ENCODE measurements at regions of chr12 and their contacts with region 1.

Region 1: DNA sequence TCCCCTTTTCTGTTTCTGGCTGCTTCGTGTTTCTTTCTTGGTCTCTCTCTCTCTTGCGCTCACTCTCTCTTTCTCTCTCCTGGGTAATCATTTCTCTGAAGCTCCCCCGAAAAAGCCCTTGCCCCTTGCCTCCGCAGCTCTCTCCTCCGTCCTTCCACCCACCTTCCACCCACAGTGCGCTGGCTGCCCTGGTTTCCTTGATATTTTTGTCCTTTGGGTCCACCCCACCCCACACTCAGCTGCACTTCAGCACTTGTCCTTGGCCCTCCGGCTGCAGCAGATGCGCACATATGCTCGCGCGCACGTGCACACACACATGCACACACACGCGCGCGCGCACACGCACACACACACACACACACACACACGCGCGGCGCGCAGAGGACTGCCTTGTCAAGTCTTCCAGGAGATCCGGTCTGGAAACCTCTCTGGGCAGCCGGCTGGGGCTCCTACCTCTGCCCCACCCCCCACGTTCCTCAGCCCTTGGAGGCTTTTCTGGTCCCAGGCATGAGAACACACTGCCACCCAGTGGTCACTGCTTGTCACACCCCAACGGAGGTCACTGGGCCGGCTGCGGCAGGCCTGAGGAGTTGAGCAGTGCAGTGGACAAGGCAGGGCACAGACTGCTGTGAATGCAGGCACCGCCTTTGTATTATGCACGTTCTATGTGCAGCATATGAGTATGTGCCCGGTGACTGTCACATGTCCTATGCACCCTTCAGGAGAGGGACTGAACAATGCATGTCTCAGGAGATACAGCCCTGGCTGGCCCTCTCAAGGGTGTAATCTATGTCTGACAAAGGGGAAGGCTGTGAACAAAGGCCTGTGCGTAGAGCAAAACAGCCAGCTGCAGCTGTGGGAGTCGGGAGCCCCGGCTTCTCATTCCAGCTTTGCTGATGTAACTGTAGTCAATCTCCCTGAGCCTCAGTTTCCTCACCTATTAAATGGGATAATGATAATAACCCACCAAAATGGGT is 6.5 kb downstream of the LAG3 start:
- DNase-seq: peak; percentile 53
- H3K4me3 ChIP-seq: peak overlapping the region; percentile 36
- H3K27me3 ChIP-seq: no peaks in the 10 kb centered on the region
- CTCF ChIP-seq: peak; percentile 95

Region 2: GRCh38 chr12:6764011-6764828 is 14.6 kb before region 1 on chr12:
- CTCF ChIA-PET with region 1: interaction called, 222 read pairs
- POLR2A ChIA-PET with region 1: interaction called, 4 read pairs
- DNase-seq: peak; percentile 98
- H3K4me3 ChIP-seq: peak overlapping the region; percentile 24
- H3K27me3 ChIP-seq: no peaks in the 10 kb centered on the region
- CTCF ChIP-seq: no peak

Region 3: DNA sequence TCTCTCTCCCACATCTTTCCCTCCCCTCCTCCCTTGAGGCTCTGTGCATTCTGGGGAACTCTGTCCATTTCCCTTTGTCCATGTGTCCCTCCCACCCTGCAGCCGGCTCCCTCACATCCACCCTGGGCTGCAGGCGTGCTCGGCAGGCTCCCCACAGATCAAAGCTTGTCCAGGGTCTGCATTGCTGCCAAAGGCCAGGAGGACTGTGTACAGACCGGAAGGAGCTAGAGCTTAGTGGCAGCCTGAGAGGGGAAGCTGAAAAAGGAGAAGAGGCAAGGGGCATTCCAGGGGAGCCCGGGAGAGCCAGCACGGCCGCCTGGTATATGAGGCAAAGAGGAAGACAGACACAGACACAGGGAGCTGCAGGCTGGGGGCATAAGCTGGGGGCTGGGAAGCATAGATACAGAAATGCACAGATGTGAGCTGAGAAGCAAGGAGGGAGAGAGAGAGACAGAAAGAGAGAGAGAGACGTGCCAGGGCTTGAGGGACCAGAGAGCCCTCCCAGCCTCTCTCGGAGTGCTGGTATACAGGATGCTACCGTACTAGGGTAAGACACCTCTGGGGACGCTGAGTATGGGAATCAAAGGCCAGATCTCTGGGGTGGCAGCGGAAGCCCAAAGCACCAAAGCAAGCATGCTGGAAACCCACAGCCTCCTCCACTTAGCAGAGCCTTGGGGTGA is 13.8 kb after region 1 on chr12:
- CTCF ChIA-PET with region 1: interaction called, 11 read pairs
- POLR2A ChIA-PET with region 1: no interaction called
- DNase-seq: no peak
- H3K4me3 ChIP-seq: no peak overlapping the region
- H3K27me3 ChIP-seq: peaks cover 2% of the 10 kb centered on the region; the same call in 1 of the 2 replicates
- CTCF ChIP-seq: no peak

Region 4: GRCh38 chr12:6825398-6826124 is 46.7 kb after region 1 on chr12:
- CTCF ChIA-PET with region 1: interaction called, 43 read pairs
- POLR2A ChIA-PET with region 1: no interaction called
- DNase-seq: no peak
- H3K4me3 ChIP-seq: peak overlapping the region; percentile 32
- H3K27me3 ChIP-seq: peaks cover 3% of the 10 kb centered on the region; the same call in 1 of the 2 replicates
- CTCF ChIP-seq: peak; percentile 97

Measured in BJ (cell line).